GM12878 (cell line): ENCODE measurements at regions of chr2 and their contacts with region 1.

Region 1: GRCh38 chr2:152573168-152573567 is 144.1 kb downstream of the PRPF40A start:
- DNase-seq: peak; percentile 70
- ATAC-seq: peak; percentile 96
- H3K4me3 ChIP-seq: no peak overlapping the region
- H3K27ac ChIP-seq: no peak overlapping the region
- H3K4me1 ChIP-seq: peaks cover 5% of the 10 kb centered on the region; the same call in 1 of the 2 replicates
- H3K27me3 ChIP-seq: no peaks in the 10 kb centered on the region
- CTCF ChIP-seq: no peak
- EP300 ChIP-seq: peak; percentile 65 to 68; a peak in 3 of 4 replicates
- POLR2A ChIP-seq: no peak
- RAD21 ChIP-seq: no peak

Region 2: GRCh38 chr2:152189622-152190495 is 383.3 kb before region 1 on chr2:
- CTCF ChIA-PET with region 1: no interaction called
- POLR2A ChIA-PET with region 1: no interaction called
- RAD21 ChIA-PET with region 1: no interaction called
- SMC1A ChIA-PET with region 1: no interaction called
- in situ Hi-C with region 1: no loop called
- intact Hi-C with region 1: loop called (anchors 1 kb)
- DNase-seq: no peak
- ATAC-seq: peak; percentile 94
- H3K4me3 ChIP-seq: no peak overlapping the region
- H3K27ac ChIP-seq: no peak overlapping the region
- H3K4me1 ChIP-seq: no peaks in the 10 kb centered on the region
- H3K27me3 ChIP-seq: no peaks in the 10 kb centered on the region
- CTCF ChIP-seq: peak; percentile 71 to 79 (median 73)
- EP300 ChIP-seq: no peak
- POLR2A ChIP-seq: no peak
- RAD21 ChIP-seq: peak; percentile 97

Region 3: GRCh38 chr2:152644189-152644873 is 71.2 kb after region 1 on chr2:
- CTCF ChIA-PET with region 1: no interaction called
- POLR2A ChIA-PET with region 1: no interaction called
- RAD21 ChIA-PET with region 1: no interaction called
- SMC1A ChIA-PET with region 1: no interaction called
- in situ Hi-C with region 1: no loop called
- intact Hi-C with region 1: no loop called
- DNase-seq: no peak
- ATAC-seq: no peak
- H3K4me3 ChIP-seq: no peak overlapping the region
- H3K27ac ChIP-seq: no peak overlapping the region
- H3K4me1 ChIP-seq: no peaks in the 10 kb centered on the region
- H3K27me3 ChIP-seq: no peaks in the 10 kb centered on the region
- CTCF ChIP-seq: no peak
- EP300 ChIP-seq: no peak
- POLR2A ChIP-seq: no peak
- RAD21 ChIP-seq: no peak